Gastrocnemius medialis (tissue), 4 donors: ENCODE measurements at regions of chr18 and their contacts with region 1.

Region 1: GRCh38 chr18:74896390-74896991 is 298.8 kb downstream of the ZNF407 start:
- DNase-seq: peak; percentile 21 to 55
- ATAC-seq: peak; percentile 81 to 99
- H3K4me3 ChIP-seq: no peak overlapping the region
- H3K27ac ChIP-seq: no peak overlapping the region
- H3K4me1 ChIP-seq: no peaks in the 10 kb centered on the region
- H3K27me3 ChIP-seq: no peaks in the 10 kb centered on the region
- CTCF ChIP-seq: peak; percentile 33 to 72 (median 40)
- POLR2A ChIP-seq: no peak

Region 2: GRCh38 chr18:75003764-75004690 is 107.5 kb after region 1 on chr18:
- in situ Hi-C with region 1: no loop called
- intact Hi-C with region 1: loop called (anchors 10 kb)
- DNase-seq: no peak
- ATAC-seq: no peak
- H3K4me3 ChIP-seq: no peak overlapping the region
- H3K27ac ChIP-seq: no peak overlapping the region
- H3K4me1 ChIP-seq: no peaks in the 10 kb centered on the region
- H3K27me3 ChIP-seq: no peaks in the 10 kb centered on the region
- CTCF ChIP-seq: no peak
- POLR2A ChIP-seq: no peak